ENCODE measurements at regions of chr6 and their contacts with region 1.

Region 1: DNA sequence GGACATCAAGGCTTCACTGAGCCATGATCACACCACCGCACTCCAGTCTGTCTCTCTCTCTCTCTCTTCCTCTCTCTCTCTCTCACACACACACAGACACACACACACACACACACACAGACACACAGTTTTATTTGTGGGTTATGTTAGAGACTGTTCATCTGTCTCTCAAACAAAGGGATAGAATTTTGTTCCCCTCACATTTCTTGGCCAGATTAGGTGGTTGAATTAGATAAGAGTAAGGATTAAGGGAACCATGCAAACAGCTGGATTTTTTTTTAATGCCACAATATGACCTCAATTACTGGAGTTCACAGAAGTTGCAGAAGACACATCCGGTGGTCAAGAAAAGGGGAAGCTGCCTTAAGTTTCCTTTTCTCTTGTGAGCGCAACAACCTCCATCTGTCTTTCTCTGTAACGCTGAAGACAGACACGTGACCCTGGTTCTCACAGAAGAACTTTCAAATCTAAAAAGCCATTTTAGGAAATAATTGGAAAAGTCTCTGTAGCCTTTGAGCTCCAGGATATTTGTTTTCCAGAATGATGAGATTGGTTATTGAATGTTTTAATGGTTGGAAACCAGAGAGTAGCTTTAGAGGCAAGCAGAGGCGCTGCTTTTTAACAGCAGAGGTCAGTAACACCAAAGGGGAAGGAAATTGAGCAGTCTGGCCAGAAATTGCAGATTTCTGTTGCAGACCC is 33.0 kb upstream of the LGSN start:
- DNase-seq: no peak
- H3K4me3 ChIP-seq: no peak overlapping the region
- CTCF ChIP-seq: peak; percentile 58

Region 2: GRCh38 chr6:63573140-63573898 is 220.6 kb after region 1 on chr6:
- CTCF ChIA-PET with region 1: interaction called, 14 read pairs
- POLR2A ChIA-PET with region 1: no interaction called
- DNase-seq: peak; percentile 12
- H3K4me3 ChIP-seq: peak overlapping the region; percentile 81
- CTCF ChIP-seq: no peak

Region 3: DNA sequence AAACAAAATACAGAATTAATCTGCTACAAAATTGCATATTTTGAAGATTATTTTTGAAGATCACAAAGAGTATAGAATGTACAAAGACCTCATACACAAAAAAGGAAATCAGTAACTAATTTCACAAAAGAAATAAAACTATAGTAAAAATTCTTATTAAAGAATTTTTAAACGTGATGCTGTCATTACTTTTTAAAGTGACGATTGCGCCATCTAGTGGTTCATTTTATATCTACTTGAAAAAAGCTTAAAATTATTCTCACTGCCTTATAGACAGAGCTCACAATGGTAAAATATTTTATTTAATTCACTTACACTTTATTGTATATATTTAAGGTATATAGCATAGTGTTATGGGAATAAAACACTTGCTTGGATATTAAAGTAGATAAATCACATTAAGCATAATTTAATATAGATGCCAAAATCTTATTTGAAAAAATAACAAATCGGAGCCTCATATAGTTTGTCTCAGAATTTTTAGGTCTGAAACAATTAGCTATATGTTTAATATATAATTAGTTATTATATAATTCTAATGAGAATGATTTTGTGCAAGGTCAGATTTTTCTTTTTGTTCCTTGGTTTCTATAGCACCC is 411.7 kb after region 1 on chr6:
- CTCF ChIA-PET with region 1: interaction called, 98 read pairs
- POLR2A ChIA-PET with region 1: no interaction called
- DNase-seq: no peak
- H3K4me3 ChIP-seq: no peak overlapping the region
- CTCF ChIP-seq: no peak

Region 4: DNA sequence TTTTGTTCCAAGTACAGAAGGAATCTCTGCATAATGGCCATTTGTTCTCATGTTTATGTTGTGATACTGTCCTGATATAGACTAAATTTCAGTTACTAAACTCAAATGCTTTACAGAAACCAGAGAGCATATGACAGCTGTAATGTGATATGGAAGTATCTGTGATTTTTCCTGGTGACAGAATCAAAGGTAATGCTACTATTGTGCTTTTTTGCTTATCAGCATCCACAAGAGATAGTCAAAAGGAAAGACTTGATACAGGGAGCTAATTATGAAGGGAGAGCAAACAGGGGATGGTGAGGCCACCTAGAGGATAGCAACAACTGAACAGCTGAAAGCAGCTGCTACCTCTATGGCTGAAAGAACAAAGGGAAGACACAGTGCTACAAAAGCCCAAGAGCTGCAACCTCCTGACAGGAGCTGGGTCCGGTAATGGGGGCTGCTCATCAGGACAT is 464.3 kb after region 1 on chr6:
- CTCF ChIA-PET with region 1: interaction called, 28 read pairs
- POLR2A ChIA-PET with region 1: no interaction called
- DNase-seq: no peak
- H3K4me3 ChIP-seq: no peak overlapping the region
- CTCF ChIP-seq: peak; percentile 22

Measured in AG04449 (cell line).